IMR-90 (cell line): ENCODE measurements at regions of chr9 and their contacts with region 1.

Region 1: DNA sequence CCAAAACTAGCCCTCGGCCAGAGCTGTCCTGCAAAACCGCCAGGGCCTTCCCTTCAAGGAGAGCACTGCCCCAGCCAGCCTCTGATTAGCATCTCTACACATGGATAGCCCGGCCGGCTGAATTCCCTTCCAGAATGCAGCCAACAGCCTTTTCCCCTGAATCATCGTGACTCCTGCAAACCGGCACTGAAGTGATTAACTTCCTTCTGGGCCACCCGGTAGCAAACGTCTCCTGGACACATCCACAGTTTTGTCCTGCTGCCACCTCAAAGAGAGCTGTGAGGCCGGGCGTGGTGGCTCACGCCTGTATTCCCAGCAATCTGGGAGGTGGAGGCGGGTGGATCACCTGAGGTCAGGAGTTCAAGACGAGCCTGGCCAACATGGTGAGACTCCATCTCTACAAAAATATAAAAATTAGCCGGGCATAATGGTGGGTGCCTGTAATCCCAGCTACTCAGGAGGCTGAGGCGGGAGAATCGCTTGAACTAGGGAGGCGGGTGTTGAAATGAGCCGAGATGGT is 21.1 kb upstream of the EEIG1 start:
- DNase-seq: peak; percentile 89
- ATAC-seq: peak; percentile 98
- H3K4me3 ChIP-seq: no peak overlapping the region
- H3K27ac ChIP-seq: peak overlapping the region; percentile 71
- H3K4me1 ChIP-seq: peaks cover 9% of the 10 kb centered on the region
- H3K27me3 ChIP-seq: no peaks in the 10 kb centered on the region
- CTCF ChIP-seq: no peak
- POLR2A ChIP-seq: 0 out of 2 replicates have a peak, but pooled peaks have one; percentile 32
- RAD21 ChIP-seq: peak; percentile 18; the same call in 1 of the 2 replicates

Region 2: GRCh38 chr9:128034821-128035764 is 33.3 kb after region 1 on chr9:
- CTCF ChIA-PET with region 1: no interaction called
- POLR2A ChIA-PET with region 1: no interaction called
- dilution Hi-C with region 1: no loop called
- in situ Hi-C with region 1: no loop called
- intact Hi-C with region 1: loop called (anchors 5 kb)
- DNase-seq: peak; percentile 71
- ATAC-seq: peak; percentile 94
- H3K4me3 ChIP-seq: no peak overlapping the region
- H3K27ac ChIP-seq: no peak overlapping the region
- H3K4me1 ChIP-seq: no peaks in the 10 kb centered on the region
- H3K27me3 ChIP-seq: peaks cover 2% of the 10 kb centered on the region
- CTCF ChIP-seq: peak; percentile 86
- POLR2A ChIP-seq: no peak
- RAD21 ChIP-seq: peak; percentile 92

Region 3: GRCh38 chr9:128081056-128081455 is 79.2 kb after region 1 on chr9:
- CTCF ChIA-PET with region 1: no interaction called
- POLR2A ChIA-PET with region 1: interaction called, 14 read pairs
- dilution Hi-C with region 1: no loop called
- in situ Hi-C with region 1: no loop called
- intact Hi-C with region 1: no loop called
- DNase-seq: peak; percentile 98
- ATAC-seq: peak; percentile 96
- H3K4me3 ChIP-seq: no peak overlapping the region
- H3K27ac ChIP-seq: peak overlapping the region; percentile 92; the same call in 1 of the 2 replicates
- H3K4me1 ChIP-seq: peaks cover 32% of the 10 kb centered on the region
- H3K27me3 ChIP-seq: no peaks in the 10 kb centered on the region
- CTCF ChIP-seq: no peak
- POLR2A ChIP-seq: no peak
- RAD21 ChIP-seq: no peak